B cell (primary cell): ENCODE measurements at regions of chr2 and their contacts with region 1.

Region 1: DNA sequence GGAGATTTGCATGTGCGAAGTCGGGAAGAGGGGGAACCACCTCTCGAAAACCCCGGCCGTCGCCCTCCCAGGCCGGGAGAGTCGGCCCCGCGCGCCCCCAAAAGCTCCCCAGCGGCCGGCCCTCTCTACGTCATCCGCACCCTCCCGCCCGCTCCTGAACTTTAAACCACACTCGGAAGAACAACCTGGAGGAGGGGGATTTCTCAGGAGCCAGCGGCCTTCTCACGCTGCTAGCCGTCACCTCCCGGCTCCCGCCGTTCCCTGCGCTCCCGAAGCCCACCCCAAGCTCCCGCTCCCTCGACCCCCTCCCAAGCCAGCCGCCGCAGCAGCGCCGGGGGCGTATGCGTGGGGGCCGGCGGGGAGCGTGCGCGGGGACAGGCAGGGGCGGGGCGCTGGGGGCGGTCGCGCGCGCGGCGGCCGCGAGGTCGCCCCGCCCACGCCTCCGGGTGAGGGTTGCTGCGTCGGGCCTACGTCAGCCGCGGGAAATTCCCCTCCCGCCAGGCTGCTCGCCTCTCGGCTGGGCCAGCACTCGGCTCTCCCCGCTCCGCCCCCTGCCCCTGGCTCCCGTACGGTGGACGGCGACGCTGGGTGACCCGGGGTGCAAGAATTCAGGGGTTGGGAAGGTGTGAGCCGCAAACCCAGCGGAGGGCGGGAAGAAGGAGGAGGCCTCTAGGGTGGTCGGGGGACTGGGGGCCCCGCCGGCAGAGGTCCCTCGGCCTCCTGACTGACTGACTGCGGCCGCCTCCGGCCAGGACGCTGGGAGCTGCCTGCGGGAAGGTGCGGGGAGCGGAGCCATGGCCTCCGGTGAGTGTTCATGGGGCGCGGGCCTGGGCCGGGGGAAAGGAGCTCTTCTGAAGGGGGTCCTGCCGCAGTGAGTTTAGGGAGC is at the start of gene REL:
- DNase-seq: peak; percentile 97
- ATAC-seq: peak; percentile 76
- H3K4me3 ChIP-seq: peak within 1 kb of the TSS; percentile 84 to 100 (median 100)
- H3K4me3 Mint-ChIP-seq: peak within 1 kb of the TSS; percentile 100
- H3K27ac ChIP-seq: peak within 1 kb of the TSS; percentile 100
- H3K27ac Mint-ChIP-seq: peak within 1 kb of the TSS; percentile 98
- H3K4me1 ChIP-seq: peaks cover 22 to 28% of the 10 kb centered on the region in 2 donors
- H3K4me1 Mint-ChIP-seq: peaks cover 36% of the 10 kb centered on the region
- H3K27me3 ChIP-seq: no peaks in the 10 kb centered on the region
- H3K27me3 Mint-ChIP-seq: no peaks in the 10 kb centered on the region
- CTCF ChIP-seq: no peak
- total RNA-seq, gene REL: 283 and 297 TPM in 2 replicates

Region 2: DNA sequence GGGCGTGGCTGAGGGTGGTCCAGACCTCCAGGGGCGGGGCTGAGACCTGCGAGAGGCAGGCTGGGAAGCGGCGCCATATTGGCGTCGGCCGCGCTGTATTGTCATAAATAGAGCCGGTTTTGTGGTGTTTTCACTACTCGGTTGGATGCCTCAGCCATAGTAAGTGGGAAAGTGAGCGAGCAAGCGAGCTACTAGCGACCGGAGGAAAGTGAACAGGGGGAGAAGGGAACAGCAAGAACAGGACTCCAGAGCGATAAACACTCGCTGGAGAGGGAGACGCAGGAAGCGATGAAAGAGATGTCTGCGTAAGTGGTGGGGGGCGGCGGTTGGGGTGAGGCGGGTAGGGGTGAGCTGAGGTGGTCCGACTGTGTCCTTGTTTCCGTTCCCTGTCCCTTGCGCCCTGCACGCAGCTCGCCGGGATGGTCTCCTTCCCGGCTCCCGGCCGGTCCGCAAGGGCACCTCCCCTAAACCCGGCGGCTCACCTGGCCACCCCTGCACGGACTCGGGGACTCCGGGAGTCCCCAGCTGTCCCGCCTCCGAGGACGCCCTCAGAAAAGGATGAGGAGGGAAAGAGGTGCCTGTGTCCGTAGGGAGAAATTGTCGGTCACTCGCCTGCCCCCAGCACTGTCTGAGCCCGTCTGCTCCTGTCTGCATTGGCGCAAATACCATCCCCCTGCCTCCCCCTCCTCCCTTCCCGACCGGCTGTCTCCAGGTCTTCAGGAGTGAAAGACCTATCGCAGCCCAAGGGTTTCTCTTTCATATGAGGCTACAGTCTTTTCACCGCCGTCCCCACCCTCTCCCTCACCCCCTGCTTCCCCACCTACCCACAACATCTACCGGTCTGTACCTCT is 124.9 kb before region 1 on chr2 and contains the start of gene PAPOLG:
- CTCF ChIA-PET with region 1: no interaction called
- POLR2A ChIA-PET with region 1: interaction called, 12 read pairs
- intact Hi-C with region 1: no loop called
- DNase-seq: peak; percentile 96
- ATAC-seq: peak; percentile 100
- H3K4me3 ChIP-seq: peak within 1 kb of the TSS; percentile 77 to 100 (median 87)
- H3K4me3 Mint-ChIP-seq: peak within 1 kb of the TSS; percentile 97
- H3K27ac ChIP-seq: peak within 1 kb of the TSS; percentile 85 to 87
- H3K27ac Mint-ChIP-seq: peak within 1 kb of the TSS; percentile 96
- H3K4me1 ChIP-seq: peaks cover 13 to 15% of the 10 kb centered on the region in 2 donors
- H3K4me1 Mint-ChIP-seq: peaks cover 29% of the 10 kb centered on the region
- H3K27me3 ChIP-seq: no peaks in the 10 kb centered on the region
- H3K27me3 Mint-ChIP-seq: no peaks in the 10 kb centered on the region
- CTCF ChIP-seq: no peak
- total RNA-seq, gene PAPOLG: 27.5 and 37.2 TPM in 2 replicates

Region 3: DNA sequence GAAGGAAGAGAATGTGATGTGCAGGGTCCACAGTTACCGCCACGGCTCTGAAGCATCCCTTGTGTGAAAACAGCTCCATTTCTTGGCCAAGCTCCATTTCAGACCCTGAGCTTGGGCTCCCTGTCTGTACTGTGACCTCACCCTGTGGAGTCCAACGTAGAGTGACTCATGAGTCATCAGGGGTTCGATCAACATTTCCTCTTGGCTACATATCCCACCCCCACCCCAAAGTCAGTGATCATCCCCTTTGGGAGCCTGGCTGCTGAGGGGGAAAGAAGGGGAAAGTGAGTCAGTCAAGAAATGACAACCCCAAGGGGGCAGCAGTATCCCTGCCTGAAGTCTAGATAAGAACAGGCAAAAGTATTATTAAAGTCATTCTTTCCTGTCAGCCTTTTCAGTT is 63.0 kb before region 1 on chr2:
- CTCF ChIA-PET with region 1: interaction called, 21 read pairs
- POLR2A ChIA-PET with region 1: interaction called, 16 read pairs
- intact Hi-C with region 1: loop called (anchors 2 kb)
- DNase-seq: peak; percentile 56
- ATAC-seq: peak; percentile 57
- H3K4me3 ChIP-seq: no peak overlapping the region
- H3K4me3 Mint-ChIP-seq: peak overlapping the region; percentile 34
- H3K27ac ChIP-seq: no peak overlapping the region
- H3K27ac Mint-ChIP-seq: peak overlapping the region; percentile 46
- H3K4me1 ChIP-seq: peaks cover 32 to 37% of the 10 kb centered on the region in 2 donors
- H3K4me1 Mint-ChIP-seq: peaks cover 44% of the 10 kb centered on the region
- H3K27me3 ChIP-seq: no peaks in the 10 kb centered on the region
- H3K27me3 Mint-ChIP-seq: no peaks in the 10 kb centered on the region
- CTCF ChIP-seq: peak; percentile 51

Region 4: GRCh38 chr2:60899230-60899891 is 18.1 kb after region 1 on chr2:
- CTCF ChIA-PET with region 1: interaction called, 4 read pairs
- POLR2A ChIA-PET with region 1: no interaction called
- intact Hi-C with region 1: loop called (anchors 2 kb)
- DNase-seq: peak; percentile 59
- ATAC-seq: peak; percentile 58
- H3K4me3 ChIP-seq: no peak overlapping the region
- H3K4me3 Mint-ChIP-seq: peak overlapping the region; percentile 65
- H3K27ac ChIP-seq: peak overlapping the region; percentile 15 to 60
- H3K27ac Mint-ChIP-seq: peak overlapping the region; percentile 89
- H3K4me1 ChIP-seq: peaks cover 11 to 15% of the 10 kb centered on the region in 2 donors
- H3K4me1 Mint-ChIP-seq: peaks cover 29% of the 10 kb centered on the region
- H3K27me3 ChIP-seq: no peaks in the 10 kb centered on the region
- H3K27me3 Mint-ChIP-seq: no peaks in the 10 kb centered on the region
- CTCF ChIP-seq: no peak

Region 5: DNA sequence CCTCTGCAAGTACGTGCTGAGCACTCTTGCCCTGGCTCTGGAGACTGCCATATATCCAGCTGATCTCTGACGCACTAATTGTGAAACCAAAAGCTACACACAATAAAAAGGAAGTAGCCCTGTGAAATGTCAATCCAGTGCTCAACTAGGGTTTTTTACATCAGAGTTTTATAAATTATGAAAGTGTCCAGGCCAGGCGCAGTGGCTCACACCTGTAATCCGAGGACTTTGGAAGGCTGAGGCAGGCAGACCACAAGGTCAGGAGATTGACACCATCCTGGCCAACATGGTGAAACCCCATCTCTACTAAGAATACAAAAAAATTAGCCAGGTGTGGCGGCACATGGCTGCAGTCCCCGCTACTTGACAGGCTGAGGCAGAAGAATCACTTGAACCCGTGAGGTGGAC is 111.7 kb after region 1 on chr2:
- CTCF ChIA-PET with region 1: interaction called, 38 read pairs
- POLR2A ChIA-PET with region 1: interaction called, 6 read pairs
- intact Hi-C with region 1: loop called (anchors 1 kb)
- DNase-seq: peak; percentile 90
- ATAC-seq: peak; percentile 94
- H3K4me3 ChIP-seq: peak overlapping the region in 3 of 5 experiments; percentile 19 to 41 (median 21)
- H3K4me3 Mint-ChIP-seq: peak overlapping the region; percentile 73
- H3K27ac ChIP-seq: peak overlapping the region; percentile 86 to 95
- H3K27ac Mint-ChIP-seq: peak overlapping the region; percentile 92
- H3K4me1 ChIP-seq: peaks cover 55 to 58% of the 10 kb centered on the region in 2 donors
- H3K4me1 Mint-ChIP-seq: peaks cover 70% of the 10 kb centered on the region
- H3K27me3 ChIP-seq: no peaks in the 10 kb centered on the region
- H3K27me3 Mint-ChIP-seq: no peaks in the 10 kb centered on the region
- CTCF ChIP-seq: no peak

Region 6: DNA sequence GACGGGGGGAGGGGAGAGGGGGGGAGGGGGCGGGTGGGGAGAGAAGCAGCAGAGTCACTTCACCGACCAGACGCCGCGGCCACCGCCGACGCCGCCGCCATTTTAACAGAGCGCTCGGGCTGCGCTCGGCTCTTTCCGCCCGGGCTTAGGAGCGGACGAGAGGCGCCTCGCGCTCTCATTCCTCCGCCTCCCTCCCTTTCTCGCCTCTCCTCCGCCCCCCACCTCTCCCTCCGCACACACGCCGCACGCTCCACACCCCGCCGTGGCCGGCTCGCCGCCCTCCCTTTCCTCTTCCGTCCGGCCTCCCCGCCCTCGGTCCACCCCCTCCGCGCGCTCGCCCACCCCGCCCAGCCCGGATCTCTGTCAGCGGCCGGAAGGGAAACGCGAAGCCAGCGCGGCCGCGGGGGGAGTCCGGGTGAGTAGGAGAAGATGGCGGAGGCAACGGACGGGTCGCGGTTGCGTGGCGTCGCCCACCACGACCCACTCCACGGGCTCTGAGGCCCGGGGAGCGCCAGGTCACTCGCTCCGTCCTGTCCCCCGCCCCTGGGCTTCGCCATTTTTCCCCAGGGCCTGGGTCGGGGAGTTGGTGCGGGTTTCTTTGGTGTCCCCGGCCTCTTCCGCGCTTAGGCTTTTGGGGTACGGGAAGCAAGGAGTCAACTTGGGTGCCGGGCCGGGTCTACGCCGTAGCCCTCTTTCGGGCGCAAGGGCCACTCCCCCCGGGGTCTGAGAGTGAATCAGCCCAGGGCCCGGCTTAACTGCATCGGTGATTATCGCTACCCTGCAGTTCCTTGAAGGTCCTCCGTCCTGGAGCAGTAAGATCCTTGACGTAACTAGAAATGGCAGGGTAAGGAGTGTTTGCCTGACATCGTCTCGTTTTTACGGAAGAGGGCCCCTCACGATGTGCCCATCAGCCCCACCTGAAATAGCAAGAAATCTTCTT is 589.9 kb after region 1 on chr2 and contains the start of gene USP34:
- CTCF ChIA-PET with region 1: no interaction called
- POLR2A ChIA-PET with region 1: no interaction called
- intact Hi-C with region 1: loop called (anchors 5 kb)
- DNase-seq: peak; percentile 96
- ATAC-seq: peak; percentile 79
- H3K4me3 ChIP-seq: peak within 1 kb of the TSS; percentile 69 to 95 (median 85)
- H3K4me3 Mint-ChIP-seq: peak within 1 kb of the TSS; percentile 93
- H3K27ac ChIP-seq: peak within 1 kb of the TSS; percentile 96 to 99
- H3K27ac Mint-ChIP-seq: peak within 1 kb of the TSS; percentile 96
- H3K4me1 ChIP-seq: peaks cover 24% of the 10 kb centered on the region in 2 donors
- H3K4me1 Mint-ChIP-seq: peaks cover 29% of the 10 kb centered on the region
- H3K27me3 ChIP-seq: no peaks in the 10 kb centered on the region
- H3K27me3 Mint-ChIP-seq: no peaks in the 10 kb centered on the region
- CTCF ChIP-seq: no peak
- total RNA-seq, gene USP34: 311 and 320 TPM in 2 replicates